AG04449 (cell line): ENCODE measurements at regions of chr2 and their contacts with region 1.

Region 1: DNA sequence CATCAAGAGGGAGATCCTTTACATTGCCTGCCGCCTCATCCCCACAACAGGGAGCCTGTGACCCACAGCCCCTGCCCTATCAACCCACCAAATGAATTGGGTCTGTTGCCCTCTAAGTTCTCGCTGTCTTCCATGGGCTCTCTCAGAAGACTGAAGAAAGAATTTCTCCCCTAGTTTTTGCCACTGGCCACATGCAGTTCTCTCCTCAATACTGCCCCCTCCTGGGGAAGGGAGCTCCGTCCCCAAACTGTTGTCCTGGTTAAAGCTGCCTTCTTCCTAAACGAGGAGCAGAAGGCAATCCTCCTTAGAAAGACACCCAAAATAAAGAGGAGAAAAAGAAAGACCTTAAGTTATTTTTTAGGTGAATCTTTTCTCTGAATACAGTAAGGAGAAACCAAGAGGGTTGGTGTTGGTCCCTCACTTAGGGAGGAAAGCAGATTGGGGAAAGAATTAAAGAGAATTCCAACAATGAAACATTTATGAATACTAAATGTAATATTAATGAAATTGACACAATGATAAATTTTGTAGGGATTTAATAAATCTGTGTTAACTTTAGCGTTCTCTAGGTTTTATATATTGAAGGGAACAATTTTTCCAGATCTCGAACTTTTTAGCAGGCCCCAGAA is 31.1 kb upstream of the SATB2 start:
- DNase-seq: no peak
- H3K4me3 ChIP-seq: no peak overlapping the region
- CTCF ChIP-seq: peak; percentile 89

Region 2: GRCh38 chr2:198296665-198297308 is 1192.1 kb before region 1 on chr2:
- CTCF ChIA-PET with region 1: interaction called, 23 read pairs
- POLR2A ChIA-PET with region 1: no interaction called
- DNase-seq: no peak
- H3K4me3 ChIP-seq: no peak overlapping the region
- CTCF ChIP-seq: peak; percentile 67

Region 3: DNA sequence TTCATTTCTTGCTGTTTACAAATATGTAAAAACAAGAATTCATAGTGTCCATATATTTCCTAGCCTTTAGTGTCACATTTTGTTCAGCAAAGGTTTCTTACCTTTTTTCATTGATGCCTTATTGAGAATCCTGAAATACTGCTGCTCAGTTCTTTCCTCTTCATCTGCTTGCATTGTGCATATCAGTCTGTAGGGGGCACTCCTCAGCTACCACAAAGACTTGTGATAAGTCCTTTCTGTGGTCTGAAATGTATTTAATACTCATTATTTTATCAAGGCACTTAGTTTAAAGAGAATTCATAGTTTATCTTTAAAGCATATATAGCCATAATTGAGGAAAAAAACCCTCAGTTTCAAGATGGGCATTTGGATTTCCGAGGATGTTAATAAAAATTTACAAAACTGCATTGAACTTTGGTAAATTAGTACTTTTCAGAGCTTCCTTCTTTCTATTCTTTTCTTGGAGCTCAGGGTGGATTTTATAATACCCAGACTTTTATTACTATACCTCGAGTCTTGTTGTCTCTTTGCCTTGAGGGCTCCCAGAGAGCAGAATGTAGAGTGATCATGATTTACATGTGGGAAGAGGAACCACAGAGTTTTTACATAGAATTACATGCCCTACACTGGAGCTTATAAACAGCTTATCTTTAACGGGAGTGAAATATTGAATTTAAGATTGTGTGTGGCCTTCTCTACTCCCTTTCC is 1114.4 kb before region 1 on chr2:
- CTCF ChIA-PET with region 1: interaction called, 10 read pairs
- POLR2A ChIA-PET with region 1: no interaction called
- DNase-seq: peak; percentile 49
- H3K4me3 ChIP-seq: no peak overlapping the region
- CTCF ChIP-seq: peak; percentile 75

Region 4: DNA sequence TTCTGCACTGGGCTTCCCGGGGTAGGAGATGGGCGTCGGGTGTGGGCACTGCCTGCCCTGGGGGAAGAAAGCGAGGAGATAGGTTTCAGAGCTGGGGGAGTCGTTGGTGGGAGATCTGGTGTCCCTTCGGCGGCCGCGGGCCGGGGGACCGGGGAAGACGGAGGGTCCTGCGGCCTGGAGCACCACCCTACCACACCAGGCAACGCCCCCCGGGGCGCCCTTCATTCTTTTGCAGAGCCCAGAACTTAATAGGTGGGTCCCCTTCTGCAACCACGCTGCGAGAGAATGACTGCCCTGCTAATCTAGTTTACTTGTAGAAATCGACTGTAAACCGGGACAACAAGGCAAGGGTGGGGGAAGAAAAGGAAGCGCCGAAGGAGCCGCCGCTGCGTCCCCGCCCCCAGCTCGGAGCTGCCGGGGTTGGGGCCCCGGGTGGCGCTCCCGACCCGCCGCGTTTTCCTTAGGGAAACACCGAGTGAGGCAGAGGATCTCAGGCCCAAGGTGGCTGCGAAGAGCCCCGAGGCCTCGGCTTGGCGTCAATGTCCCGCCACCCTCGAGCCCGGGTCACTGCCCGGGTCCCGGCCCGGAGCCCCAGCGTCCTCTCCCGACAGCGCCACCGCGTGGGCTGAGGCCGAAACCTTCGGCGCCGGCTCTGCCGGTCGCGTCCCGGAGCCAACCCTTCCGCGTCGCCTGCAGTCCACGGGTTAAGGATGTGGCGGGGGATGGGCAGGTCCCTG is 25.8 kb before region 1 on chr2:
- CTCF ChIA-PET with region 1: interaction called, 133 read pairs
- POLR2A ChIA-PET with region 1: no interaction called
- DNase-seq: no peak
- H3K4me3 ChIP-seq: peak overlapping the region; percentile 67
- CTCF ChIP-seq: peak; percentile 96

Region 5: GRCh38 chr2:199739413-199740110 is 250.7 kb after region 1 on chr2:
- CTCF ChIA-PET with region 1: interaction called, 16 read pairs
- POLR2A ChIA-PET with region 1: no interaction called
- DNase-seq: no peak
- H3K4me3 ChIP-seq: no peak overlapping the region
- CTCF ChIP-seq: peak; percentile 73